ENCODE measurements at regions of chr1 and their contacts with region 1.

Region 1: DNA sequence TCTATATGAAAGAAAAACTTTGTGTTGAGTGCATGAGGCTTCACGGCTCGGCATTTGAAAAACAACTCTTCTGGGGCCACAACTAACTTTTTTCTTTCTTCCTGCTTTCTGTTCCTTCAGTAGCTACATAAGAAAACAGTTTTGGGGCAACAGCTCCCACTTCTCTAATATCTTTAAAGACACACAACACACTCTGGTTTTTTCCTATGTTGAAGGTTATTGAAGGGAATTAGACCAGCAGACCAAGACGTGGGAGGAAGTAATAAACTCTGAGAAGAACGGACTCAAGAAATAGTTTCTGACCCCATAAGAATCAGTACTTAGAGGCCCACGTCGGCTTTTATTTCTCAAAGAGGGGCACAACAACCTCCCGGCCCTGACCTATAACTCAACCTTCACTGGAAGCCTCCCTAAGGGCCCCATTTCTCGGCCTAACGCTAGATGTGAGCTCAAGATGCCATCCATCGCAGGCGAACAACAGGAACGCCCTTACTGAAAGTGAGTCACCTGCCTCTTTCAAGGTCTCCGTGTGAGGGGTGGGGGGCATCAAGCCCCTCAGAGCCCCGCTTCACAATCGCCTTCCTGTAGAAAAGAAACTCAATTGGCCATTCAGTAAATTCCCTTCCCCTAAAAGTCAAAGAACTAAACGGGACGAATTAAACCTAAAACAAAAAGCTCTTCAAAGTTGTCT is 844 bp downstream of the ZMYM6 start:
- DNase-seq: no peak
- ATAC-seq: peak; percentile 70
- H3K4me3 ChIP-seq: peak overlapping the region; percentile 85
- H3K27ac ChIP-seq: peak overlapping the region; percentile 90
- H3K4me1 ChIP-seq: peaks cover 3% of the 10 kb centered on the region; the same call in 1 of the 2 replicates
- H3K27me3 ChIP-seq: no peaks in the 10 kb centered on the region
- CTCF ChIP-seq: no peak
- EP300 ChIP-seq: no peak
- POLR2A ChIP-seq: no peak
- RAD21 ChIP-seq: no peak

Region 2: GRCh38 chr1:34859446-34860200 is 171.3 kb before region 1 on chr1 and contains the start of gene SMIM12:
- CTCF ChIA-PET with region 1: no interaction called
- POLR2A ChIA-PET with region 1: interaction called, 3 read pairs
- RAD21 ChIA-PET with region 1: no interaction called
- SMC1A ChIA-PET with region 1: no interaction called
- in situ Hi-C with region 1: no loop called
- intact Hi-C with region 1: loop called (anchors 2 kb)
- DNase-seq: peak; percentile 62
- ATAC-seq: peak; percentile 100
- H3K4me3 ChIP-seq: peak within 1 kb of the TSS; percentile 96
- H3K27ac ChIP-seq: peak within 1 kb of the TSS; percentile 81
- H3K4me1 ChIP-seq: no peaks in the 10 kb centered on the region
- H3K27me3 ChIP-seq: no peaks in the 10 kb centered on the region
- CTCF ChIP-seq: peak; percentile 84 to 93 (median 92)
- EP300 ChIP-seq: peak in 1 of 2 experiments; percentile 30; a peak in 1 of 4 replicates
- POLR2A ChIP-seq: peak; percentile 100
- RAD21 ChIP-seq: no peak
- polyA plus RNA-seq, gene SMIM12: 26.1 to 42.9 TPM

Region 3: GRCh38 chr1:35016406-35016805 is 14.5 kb before region 1 on chr1:
- CTCF ChIA-PET with region 1: interaction called, 13 read pairs
- POLR2A ChIA-PET with region 1: interaction called, 11 read pairs
- RAD21 ChIA-PET with region 1: interaction called, 8 read pairs
- SMC1A ChIA-PET with region 1: interaction called, 15 read pairs
- in situ Hi-C with region 1: no loop called
- intact Hi-C with region 1: no loop called
- DNase-seq: no peak
- ATAC-seq: no peak
- H3K4me3 ChIP-seq: no peak overlapping the region
- H3K27ac ChIP-seq: no peak overlapping the region
- H3K4me1 ChIP-seq: no peaks in the 10 kb centered on the region
- H3K27me3 ChIP-seq: no peaks in the 10 kb centered on the region
- CTCF ChIP-seq: no peak
- EP300 ChIP-seq: no peak
- POLR2A ChIP-seq: no peak
- RAD21 ChIP-seq: no peak

Region 4: DNA sequence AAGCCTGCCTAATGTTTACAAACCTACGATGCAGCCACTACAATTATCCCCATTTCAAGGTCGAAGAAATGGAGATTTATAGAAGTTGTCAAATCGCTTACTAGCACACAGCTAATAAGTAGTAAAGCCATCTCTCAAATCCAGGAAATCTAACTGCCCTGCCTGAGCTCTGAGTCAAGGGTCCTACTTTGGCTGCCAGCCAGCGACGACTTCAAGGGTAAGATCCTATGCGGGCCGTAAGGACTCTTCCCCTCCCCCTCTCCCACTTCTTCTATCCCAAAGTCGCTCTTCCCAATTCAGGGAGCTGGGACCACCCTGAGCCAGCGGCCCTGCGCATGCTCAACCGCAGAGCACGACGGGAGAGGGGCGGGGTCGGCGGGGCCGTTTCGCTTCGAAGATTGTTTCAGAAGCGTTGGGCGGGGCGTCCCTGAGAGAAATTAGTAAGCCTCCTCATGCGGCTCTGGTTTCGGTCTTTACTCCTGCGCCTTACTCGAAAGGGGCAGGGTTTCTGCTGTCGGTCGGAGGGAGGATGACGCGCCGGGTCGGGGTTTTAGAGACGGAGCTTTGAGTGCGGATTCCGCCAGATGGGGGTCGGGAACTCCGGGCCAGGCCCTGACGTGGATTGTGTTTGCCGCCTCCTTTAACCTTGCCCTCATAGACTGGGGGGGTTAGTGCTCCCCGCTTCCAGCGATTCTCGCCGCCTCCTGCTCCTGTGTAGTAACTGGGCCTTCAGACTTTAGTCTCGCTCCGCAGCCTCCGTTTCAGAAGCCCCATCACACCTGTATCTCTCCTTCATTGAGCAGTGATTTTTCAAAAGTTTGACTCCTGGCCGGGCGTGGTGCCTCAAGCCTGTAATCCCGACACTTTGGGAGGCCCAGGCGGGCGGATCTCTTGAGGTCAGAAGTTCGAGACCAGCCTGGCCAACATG is 48.4 kb after region 1 on chr1 and contains the start of gene ZMYM1:
- CTCF ChIA-PET with region 1: no interaction called
- POLR2A ChIA-PET with region 1: interaction called, 11 read pairs
- RAD21 ChIA-PET with region 1: interaction called, 7 read pairs
- SMC1A ChIA-PET with region 1: interaction called, 4 read pairs
- in situ Hi-C with region 1: no loop called
- intact Hi-C with region 1: no loop called
- DNase-seq: peak; percentile 63
- ATAC-seq: peak; percentile 99
- H3K4me3 ChIP-seq: peak within 1 kb of the TSS; percentile 66
- H3K27ac ChIP-seq: peak within 1 kb of the TSS; percentile 60
- H3K4me1 ChIP-seq: no peaks in the 10 kb centered on the region; the same call in 1 of the 2 replicates
- H3K27me3 ChIP-seq: no peaks in the 10 kb centered on the region
- CTCF ChIP-seq: no peak
- EP300 ChIP-seq: peak in 1 of 2 experiments; percentile 39; a peak in 1 of 4 replicates
- POLR2A ChIP-seq: peak; percentile 73
- RAD21 ChIP-seq: no peak; the same call in 1 of the 2 replicates
- polyA plus RNA-seq, gene ZMYM1: 0.68 to 2.1 TPM

Region 5: DNA sequence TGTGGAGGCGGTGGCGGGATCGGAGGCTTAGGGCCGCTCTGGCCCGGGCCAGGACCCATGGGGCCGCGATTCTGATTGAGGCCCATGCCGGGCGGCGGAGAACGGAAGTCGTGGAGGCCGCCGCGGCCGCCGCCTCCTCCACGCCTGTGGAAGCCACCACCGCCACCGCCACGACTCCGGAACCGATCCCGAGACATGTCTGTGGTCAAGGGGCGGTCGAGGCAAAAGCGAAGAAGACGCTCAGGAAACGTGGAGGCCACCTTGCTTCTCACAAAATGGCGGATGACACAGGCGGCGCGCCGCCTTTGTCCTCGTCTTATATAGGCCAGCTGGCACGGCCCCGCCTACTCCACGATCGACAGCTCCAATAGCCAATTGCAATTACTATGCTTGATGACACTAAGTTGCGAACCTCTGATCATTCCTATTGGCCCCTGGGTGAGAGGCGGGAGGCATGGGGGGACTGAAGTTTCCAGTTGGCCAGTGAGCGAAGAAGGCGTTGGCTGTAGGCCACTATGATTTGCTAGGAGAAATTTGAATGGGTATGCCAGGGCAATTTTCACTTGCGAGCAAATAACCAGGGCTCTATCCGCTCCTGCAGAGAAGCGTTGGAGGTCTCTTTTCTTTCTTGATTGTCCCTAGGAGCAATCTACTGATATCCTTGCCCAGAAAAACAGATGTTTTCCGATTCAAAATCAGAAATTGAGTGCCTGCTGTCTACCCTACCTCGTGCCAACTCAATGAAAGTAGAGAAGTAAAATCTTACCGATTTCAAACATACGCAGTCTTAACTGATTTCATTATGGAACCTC is 162.2 kb after region 1 on chr1 and contains the start of gene SFPQ:
- CTCF ChIA-PET with region 1: no interaction called
- POLR2A ChIA-PET with region 1: no interaction called
- RAD21 ChIA-PET with region 1: no interaction called
- SMC1A ChIA-PET with region 1: interaction called, 3 read pairs
- in situ Hi-C with region 1: no loop called
- intact Hi-C with region 1: loop called (anchors 5 kb)
- DNase-seq: peak; percentile 97
- ATAC-seq: peak; percentile 93
- H3K4me3 ChIP-seq: peak within 1 kb of the TSS; percentile 80
- H3K27ac ChIP-seq: peak within 1 kb of the TSS; percentile 94
- H3K4me1 ChIP-seq: no peaks in the 10 kb centered on the region
- H3K27me3 ChIP-seq: no peaks in the 10 kb centered on the region
- CTCF ChIP-seq: no peak
- EP300 ChIP-seq: no peak
- POLR2A ChIP-seq: peak; percentile 98
- RAD21 ChIP-seq: no peak
- polyA plus RNA-seq, gene SFPQ: 78.5 to 117 TPM

Measured in GM12878 (cell line).